Pancreas (tissue), 10 donors: ENCODE measurements at regions of chr17 and their contacts with region 1.

Region 1: DNA sequence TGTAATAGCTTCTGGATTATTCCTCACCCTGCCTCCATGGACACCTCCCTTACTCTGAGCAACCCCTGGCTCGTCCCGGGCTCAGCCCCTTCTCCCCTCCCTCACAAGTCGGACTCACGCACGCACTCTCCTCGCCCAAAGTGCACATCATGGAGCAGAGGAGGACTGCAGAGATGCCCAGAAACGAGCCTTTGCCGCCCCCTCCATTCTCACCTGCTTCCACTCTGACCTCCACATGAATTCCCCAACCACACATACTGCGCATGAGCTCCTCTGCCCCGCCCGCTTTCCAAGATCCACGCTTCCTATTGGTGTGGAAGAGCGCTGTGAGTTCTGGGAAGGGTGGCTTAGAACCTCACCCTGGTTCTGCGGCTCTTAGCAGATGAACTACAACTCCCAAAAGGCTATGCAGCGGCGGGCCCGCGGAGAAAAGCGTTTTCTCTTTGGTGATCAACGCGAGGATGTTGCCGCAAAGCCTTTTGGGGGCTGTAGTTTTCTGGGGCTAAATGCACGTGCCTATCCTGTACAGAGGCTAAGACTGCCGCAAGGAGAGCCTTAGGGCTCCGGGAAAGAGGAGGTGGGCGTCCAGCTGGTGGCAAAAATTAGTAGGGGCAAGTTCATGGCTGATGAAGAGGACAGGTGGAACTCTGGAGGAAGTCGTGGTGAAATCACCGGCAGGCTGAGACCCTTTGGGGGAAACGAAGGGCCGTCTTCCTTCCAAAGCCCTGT is at the start of gene PHB1:
- DNase-seq: peak; percentile 91 to 98 (median 96)
- ATAC-seq: peak; percentile 99 to 100 (median 100)
- H3K4me3 ChIP-seq: peak within 1 kb of the TSS; percentile 28 to 89 (median 70)
- H3K27ac ChIP-seq: peak within 1 kb of the TSS in 1 of 4 donors; percentile 16
- H3K4me1 ChIP-seq: peaks cover 0 to 9% (median 8%) of the 10 kb centered on the region in 3 donors
- H3K27me3 ChIP-seq: no peaks in the 10 kb centered on the region
- CTCF ChIP-seq: no peak
- total RNA-seq, gene PHB1: 30.1 to 71.8 (median 59.4) TPM

Region 2: DNA sequence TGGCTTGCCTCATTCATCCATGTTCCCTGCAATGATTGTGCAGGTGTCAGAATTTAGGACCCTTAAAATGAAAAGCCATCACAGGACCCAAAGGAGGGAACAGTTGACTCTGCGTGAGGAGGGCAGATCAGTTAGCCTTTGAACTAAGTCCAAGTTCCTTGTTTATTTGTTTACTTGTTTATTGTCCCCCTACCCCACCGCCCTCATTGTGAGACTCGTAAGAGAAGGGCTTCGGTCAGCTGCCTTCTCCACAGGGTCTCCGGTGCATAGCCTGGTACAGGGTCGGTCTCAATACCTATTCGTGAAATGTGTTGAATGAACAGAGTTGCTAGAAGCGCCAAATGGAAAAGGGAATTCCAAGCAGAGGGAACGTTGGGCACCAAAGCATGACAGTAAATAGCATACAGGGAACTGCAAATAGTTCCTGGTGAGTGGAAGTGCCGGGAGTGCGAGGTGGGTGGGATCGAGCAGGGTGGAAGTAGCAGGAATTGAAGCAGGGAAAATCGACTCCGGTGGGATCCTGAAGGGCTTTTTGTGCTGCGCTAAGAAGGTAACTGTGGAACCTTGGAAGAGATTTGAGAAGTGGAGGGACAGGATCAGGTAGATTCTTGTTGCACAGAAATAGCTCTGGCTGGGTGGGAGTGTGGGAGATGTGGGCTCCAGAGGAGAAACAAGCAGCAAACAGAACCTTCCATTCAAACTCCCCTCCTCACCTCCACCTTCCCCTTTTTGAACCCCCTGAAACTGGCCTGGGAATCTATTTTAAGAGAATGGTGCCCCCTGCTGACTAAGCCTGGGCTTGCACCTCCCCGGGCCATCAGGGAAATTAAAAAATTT is 280.3 kb after region 1 on chr17:
- intact Hi-C with region 1: loop called in 1 of 3 experiments (anchors 10 kb)
- DNase-seq: peak in 4 of 6 donors; percentile 32 to 83 (median 56)
- ATAC-seq: peak; percentile 59 to 87 (median 80)
- H3K4me3 ChIP-seq: no peak overlapping the region
- H3K27ac ChIP-seq: no peak overlapping the region
- H3K4me1 ChIP-seq: no peaks in the 10 kb centered on the region
- H3K27me3 ChIP-seq: no peaks in the 10 kb centered on the region
- CTCF ChIP-seq: peak; percentile 71 to 89 (median 85)